Activated T-helper 2 cell treated with anti-CD3 and anti-CD28 coated beads, Interferon-gamma antibody, Interleukin-2, Interleukin-4, amounts not matched to agents 10 μg/mL and 5 μg/mL and 100 μg/mL, durations not matched to agents 14 hours and 24 hours and 36 hours (primary cell): ENCODE measurements at regions of chr19 and their contacts with region 1.

Region 1: DNA sequence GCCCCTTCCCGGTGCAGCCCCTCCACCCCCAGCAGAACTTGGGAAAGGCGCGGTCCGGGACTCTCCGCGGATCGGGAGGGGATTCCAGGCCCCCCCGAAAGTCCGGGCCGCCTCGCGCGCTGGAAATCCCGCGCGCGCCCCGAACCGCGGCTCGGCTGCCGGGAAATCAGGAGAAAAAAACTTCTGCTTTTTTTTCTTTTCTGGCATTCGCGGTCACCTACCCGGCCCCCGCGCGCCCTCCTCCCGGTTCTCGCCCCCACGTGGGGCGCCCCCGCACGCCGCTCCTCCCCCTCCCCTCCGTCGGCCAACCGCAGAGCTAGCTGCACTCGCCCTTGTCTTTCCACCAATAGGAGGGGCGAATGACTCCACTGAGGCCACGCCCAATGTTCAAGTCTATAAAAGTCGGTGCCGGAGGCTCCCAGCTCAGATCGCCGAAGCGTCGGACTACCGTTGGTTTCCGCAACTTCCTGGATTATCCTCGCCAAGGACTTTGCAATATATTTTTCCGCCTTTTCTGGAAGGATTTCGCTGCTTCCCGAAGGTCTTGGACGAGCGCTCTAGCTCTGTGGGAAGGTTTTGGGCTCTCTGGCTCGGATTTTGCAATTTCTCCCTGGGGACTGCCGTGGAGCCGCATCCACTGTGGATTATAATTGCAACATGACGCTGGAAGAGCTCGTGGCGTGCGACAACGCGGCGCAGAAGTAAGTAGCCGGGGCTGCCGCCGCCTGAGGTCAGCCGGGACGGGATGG is at the start of gene GADD45B:
- DNase-seq: peak; percentile 95
- H3K4me3 Mint-ChIP-seq: peak within 1 kb of the TSS; percentile 96
- H3K27ac Mint-ChIP-seq: peak within 1 kb of the TSS; percentile 89
- H3K4me1 Mint-ChIP-seq: peaks cover 13% of the 10 kb centered on the region
- H3K27me3 Mint-ChIP-seq: peaks cover 3% of the 10 kb centered on the region
- total RNA-seq, gene GADD45B: 90.7 and 95.2 TPM in 2 replicates

Region 2: GRCh38 chr19:2427429-2428320 is 48.2 kb before region 1 on chr19 and contains the start of gene TIMM13:
- intact Hi-C with region 1: no loop called
- DNase-seq: peak; percentile 97
- H3K4me3 Mint-ChIP-seq: peak within 1 kb of the TSS; percentile 95
- H3K27ac Mint-ChIP-seq: peak within 1 kb of the TSS; percentile 96
- H3K4me1 Mint-ChIP-seq: peaks cover 4% of the 10 kb centered on the region
- H3K27me3 Mint-ChIP-seq: no peaks in the 10 kb centered on the region
- total RNA-seq, gene TIMM13: 139 and 145 TPM in 2 replicates

Region 3: DNA sequence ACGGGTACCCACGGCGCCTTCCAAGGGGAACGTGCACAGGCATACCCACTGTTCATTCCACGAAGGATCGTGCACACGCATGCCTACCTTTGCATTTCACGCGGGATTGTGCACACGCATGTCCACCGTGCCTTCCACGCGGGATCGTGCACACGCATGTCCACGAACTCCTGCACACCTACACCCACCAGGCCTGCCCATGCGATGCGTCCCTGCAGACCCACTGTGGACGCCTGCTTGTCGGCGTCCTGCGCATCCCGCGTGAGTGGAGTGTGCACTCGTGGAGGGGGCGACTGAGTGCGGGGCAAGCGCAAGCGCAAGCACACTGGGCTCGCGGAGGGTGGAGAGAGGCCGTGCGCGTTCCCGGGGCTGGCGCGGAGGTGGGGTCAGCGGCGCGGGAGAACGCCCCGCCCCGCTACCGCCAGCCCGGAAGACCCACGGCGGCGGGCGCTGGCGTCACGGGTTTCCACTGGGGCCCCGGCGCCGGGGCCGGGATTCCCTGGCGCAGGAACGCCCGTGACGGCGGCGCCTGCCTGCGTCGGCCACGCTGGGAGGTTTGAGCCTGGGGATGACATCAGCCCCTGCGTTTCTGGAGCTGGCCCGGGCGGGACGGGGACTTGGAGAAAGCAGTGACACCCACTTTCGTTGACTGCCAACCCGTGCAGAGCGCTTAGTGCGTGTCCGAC is 18.7 kb after region 1 on chr19:
- intact Hi-C with region 1: loop called (anchors 2 kb)
- DNase-seq: peak; percentile 39
- H3K4me3 Mint-ChIP-seq: peak overlapping the region; percentile 66
- H3K27ac Mint-ChIP-seq: no peak overlapping the region
- H3K4me1 Mint-ChIP-seq: peaks cover 21% of the 10 kb centered on the region
- H3K27me3 Mint-ChIP-seq: peaks cover 34% of the 10 kb centered on the region

Region 4: DNA sequence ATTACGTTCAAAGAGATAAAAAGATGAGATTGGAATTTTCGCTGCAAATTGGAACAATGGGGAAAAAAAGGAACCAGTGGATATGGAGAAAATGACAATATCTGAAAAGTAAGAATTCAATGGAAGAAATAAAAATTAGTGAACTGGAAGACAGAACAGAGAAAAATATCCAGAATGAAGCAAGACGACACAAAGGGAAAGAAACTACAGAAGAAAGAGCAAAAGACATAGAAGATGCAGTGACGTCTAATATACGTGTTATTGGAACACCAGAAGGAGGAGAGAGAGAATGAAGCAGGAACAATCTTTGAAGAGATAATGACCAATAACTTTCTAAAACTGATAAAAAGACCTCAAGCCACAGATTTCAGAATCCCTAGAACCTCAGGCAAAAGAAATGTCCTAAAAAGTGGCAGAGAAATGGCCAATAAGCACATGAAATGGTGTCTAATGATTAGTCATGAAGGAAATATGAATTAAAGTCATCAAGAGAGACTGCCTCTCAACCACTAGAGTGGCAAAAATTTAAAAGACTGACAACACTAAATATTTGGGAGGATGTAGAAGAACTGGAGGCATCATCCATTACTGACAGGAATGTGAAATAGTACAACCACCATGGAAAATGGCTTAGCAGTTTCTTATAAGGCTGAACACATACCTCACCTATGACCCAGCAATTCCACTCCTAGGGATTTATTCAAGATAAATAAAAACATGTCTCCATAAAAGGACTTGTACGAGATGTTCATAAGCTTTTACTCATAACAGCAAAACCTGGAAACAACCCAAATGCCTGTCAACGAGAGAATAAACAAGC is 56.6 kb after region 1 on chr19:
- intact Hi-C with region 1: loop called (anchors 2 kb)
- DNase-seq: no peak
- H3K4me3 Mint-ChIP-seq: no peak overlapping the region
- H3K27ac Mint-ChIP-seq: no peak overlapping the region
- H3K4me1 Mint-ChIP-seq: peaks cover 24% of the 10 kb centered on the region
- H3K27me3 Mint-ChIP-seq: peaks cover 5% of the 10 kb centered on the region

Region 5: DNA sequence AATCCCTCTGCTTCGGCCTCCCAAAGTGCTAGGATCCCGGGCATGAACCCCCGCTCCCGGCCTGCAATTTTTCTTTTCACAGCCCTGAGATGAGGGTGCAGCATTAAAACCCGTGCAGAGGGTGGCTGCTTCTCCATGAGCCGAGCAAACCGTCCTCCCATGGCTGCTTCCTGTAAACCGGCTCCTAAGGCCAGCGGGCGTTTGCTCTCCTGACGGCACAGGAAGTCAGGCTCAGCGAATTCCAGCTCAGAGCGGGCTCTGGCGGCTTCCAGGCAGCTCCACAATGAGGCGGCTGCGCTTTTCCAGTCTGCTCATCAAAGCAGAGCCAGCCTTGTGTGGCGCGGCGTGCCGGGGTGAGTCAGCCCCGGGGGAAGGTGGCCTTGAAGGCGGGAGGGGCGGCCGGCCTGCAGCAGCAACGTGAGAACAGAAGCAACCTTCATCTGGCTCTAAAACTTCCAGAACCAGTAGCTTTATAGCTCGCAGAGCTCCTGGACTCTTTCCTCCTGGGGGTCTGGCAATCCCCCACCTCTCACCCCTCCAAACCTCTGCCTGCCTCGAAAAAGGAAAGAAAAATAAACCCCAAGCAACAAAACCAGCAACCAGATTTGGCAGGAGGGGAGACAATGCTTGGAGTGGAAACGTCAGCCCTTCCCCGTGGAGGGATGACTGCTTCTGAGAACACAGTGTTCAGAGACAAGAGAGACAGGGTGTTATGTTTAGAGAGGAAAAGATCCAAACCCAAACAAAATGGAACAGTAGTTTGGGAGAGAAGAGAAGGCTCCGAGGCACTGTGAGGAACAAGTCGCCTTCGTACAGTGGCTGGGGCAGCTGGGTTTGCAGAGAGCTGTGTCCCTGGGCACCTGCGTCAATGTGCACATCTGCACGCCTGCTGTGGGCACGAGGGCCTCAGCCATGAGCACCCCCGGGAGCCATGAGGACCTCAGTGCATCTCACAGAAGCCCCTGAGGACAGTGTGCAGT is 67.9 kb after region 1 on chr19:
- intact Hi-C with region 1: no loop called
- DNase-seq: peak; percentile 32
- H3K4me3 Mint-ChIP-seq: peak overlapping the region; percentile 20
- H3K27ac Mint-ChIP-seq: no peak overlapping the region
- H3K4me1 Mint-ChIP-seq: peaks cover 14% of the 10 kb centered on the region
- H3K27me3 Mint-ChIP-seq: no peaks in the 10 kb centered on the region

Region 6: GRCh38 chr19:2578901-2579677 is 103.2 kb after region 1 on chr19:
- intact Hi-C with region 1: loop called (anchors 1 kb)
- DNase-seq: peak; percentile 51
- H3K4me3 Mint-ChIP-seq: peak overlapping the region; percentile 21
- H3K27ac Mint-ChIP-seq: no peak overlapping the region
- H3K4me1 Mint-ChIP-seq: peaks cover 3% of the 10 kb centered on the region
- H3K27me3 Mint-ChIP-seq: peaks cover 14% of the 10 kb centered on the region

Region 7: GRCh38 chr19:2610637-2611482 is 135.0 kb after region 1 on chr19:
- intact Hi-C with region 1: loop called (anchors 1 kb)
- DNase-seq: peak; percentile 77
- H3K4me3 Mint-ChIP-seq: peak overlapping the region; percentile 77
- H3K27ac Mint-ChIP-seq: no peak overlapping the region
- H3K4me1 Mint-ChIP-seq: peaks cover 31% of the 10 kb centered on the region
- H3K27me3 Mint-ChIP-seq: peaks cover 11% of the 10 kb centered on the region

Region 8: GRCh38 chr19:2636897-2637683 is 161.2 kb after region 1 on chr19:
- intact Hi-C with region 1: loop called (anchors 1 kb)
- DNase-seq: peak; percentile 65
- H3K4me3 Mint-ChIP-seq: no peak overlapping the region
- H3K27ac Mint-ChIP-seq: no peak overlapping the region
- H3K4me1 Mint-ChIP-seq: peaks cover 7% of the 10 kb centered on the region
- H3K27me3 Mint-ChIP-seq: peaks cover 10% of the 10 kb centered on the region